ENCODE measurements at regions of chr11 and their contacts with region 1.

Region 1: DNA sequence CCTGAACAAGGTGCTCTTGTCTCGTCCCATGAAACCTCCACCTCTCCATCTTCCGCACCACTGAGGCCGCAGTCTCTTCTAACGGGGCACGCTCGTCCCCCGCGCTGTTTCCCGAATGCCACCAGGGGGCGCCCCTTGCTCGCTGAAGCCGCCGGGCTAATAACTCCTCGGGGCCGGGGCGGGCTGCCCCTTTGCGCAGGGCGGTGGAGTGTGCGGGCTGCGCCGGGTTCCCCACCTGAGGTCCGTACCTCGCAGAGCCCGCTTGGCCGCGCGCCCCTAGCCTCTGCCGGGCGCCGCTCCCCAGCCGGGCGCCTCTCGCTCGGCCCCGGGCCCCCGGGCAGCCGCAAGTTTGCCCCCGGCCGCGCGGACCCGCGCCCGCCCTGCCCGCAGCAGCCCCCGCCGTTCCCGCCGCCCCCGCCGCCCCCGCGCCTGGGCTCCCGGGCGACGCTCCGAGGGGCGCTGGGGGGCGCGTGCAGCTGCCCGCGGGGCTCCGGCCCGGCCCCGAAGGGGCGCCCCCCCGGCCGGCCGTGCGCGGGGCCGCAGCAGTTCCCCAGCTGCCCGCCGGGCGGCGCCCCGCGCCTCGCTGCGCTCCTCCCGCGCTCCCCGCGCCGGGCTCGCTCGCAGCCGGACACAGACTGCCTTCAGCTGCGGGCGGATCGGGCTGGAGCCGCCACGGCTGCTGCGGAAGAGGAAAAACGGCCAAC is at the start of gene GRIK4:
- DNase-seq: peak; percentile 96
- total RNA-seq, gene GRIK4: 0.19 TPM in 1 of 2 donors, not detected in the other

Region 2: GRCh38 chr11:119236490-119236889 is 1274.8 kb before region 1 on chr11:
- intact Hi-C with region 1: no loop called
- DNase-seq: no peak

Region 3: GRCh38 chr11:120457996-120458395 is 53.3 kb before region 1 on chr11:
- intact Hi-C with region 1: no loop called
- DNase-seq: no peak

Region 4: DNA sequence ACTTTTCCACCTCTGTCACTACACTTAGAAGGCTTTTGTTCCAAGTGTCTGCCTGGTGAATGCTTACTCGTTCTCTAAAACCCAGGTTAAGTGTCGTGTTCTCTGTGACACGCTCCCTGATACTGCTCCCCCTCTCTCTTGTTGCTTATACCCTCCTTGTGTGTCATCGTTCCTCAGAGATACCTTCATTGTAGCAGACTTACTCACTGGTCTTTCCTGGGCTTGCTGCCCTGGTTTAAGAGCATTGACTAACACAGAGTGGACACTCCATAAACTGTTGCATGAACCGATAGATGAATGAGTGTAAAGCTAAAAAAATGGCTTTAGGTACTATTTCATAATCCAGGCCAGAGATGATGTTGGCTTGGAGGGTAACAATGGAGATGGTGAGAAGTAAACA is 171.6 kb after region 1 on chr11:
- intact Hi-C with region 1: loop called (anchors 2 kb)
- DNase-seq: no peak

Region 5: GRCh38 chr11:120703358-120704152 is 192.3 kb after region 1 on chr11:
- intact Hi-C with region 1: no loop called
- DNase-seq: no peak

Region 6: DNA sequence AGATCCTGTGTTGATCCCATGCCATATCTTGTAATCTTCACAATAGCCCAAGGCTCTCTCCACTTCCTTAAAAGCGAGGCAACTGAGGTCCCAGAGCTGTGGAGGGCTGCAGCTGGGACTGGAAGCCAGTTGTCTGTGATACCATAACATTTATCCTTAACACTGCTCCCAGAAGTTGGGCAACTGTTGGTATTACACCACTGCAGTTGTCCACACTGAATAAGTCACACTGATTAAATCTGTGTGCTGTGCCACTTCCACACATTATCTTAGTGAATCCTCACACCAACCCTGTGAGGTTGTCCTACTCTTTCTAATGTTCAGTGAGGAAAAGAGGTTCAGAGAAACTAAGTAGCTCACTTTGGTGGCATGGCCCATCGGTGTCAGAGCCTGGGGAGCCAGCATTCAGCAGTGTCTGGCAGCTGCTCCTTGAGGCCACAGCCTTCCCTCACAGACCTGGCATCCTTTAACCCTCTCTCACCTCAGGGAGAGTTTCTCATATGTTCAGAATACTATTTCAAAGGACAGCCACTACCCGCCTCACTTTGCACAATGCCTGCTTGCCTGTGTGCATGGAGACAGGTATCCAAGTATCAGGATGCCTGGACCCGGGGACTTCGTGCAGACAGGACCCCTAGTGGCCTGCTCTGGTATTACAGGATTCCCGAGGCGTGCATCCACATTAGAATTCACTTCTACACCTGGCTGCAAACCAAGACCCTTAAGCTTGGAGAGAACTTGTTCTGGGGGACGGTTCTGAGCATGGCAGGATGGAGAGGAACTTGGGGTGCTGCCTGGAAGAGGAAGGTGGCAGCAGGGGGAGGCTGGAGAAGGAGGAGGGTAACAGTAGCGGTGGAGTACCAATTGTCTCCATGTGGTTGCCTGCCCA is 290.8 kb after region 1 on chr11:
- intact Hi-C with region 1: loop called in 1 of 2 experiments (anchors 10 kb)
- DNase-seq: no peak